G401 (cell line): ENCODE measurements at regions of chr5 and their contacts with region 1.

Region 1: GRCh38 chr5:135741047-135741446 is 93.4 kb upstream of the SLC25A48 start:
- DNase-seq: no peak

Region 2: DNA sequence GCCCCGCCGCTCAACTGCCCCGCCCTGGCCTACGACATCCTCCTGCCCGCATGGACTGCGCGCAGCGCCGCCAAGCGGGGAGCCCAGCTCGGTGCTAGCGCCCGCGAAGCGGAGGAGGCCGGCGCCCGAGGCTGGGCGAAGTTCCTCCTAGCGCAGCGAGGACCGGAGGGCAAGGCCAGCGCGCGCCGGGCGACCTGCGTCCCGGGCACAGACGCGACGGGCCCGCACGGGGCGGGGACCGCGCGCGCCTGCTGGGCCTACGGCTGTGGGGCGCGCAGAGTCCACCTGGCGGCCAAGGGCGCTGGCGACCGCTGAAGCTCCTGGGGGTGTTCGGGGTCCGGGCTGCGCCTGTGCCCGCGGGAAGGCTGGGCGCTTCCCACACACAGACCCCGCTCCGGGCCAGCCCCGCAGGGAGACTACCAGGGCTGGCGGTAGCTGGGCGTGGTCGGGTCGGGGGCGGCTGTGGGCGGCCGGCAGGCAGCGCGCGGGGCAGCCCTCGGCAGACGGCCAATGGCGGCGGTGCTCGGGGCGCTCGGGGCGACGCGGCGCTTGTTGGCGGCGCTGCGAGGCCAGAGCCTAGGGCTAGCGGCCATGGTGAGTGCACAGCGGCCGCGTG is 836.3 kb before region 1 on chr5 and contains the start of gene PCBD2:
- in situ Hi-C with region 1: no loop called
- DNase-seq: peak; percentile 82
- total RNA-seq, gene PCBD2: 4.0 and 12.7 TPM in 2 replicates

Region 3: DNA sequence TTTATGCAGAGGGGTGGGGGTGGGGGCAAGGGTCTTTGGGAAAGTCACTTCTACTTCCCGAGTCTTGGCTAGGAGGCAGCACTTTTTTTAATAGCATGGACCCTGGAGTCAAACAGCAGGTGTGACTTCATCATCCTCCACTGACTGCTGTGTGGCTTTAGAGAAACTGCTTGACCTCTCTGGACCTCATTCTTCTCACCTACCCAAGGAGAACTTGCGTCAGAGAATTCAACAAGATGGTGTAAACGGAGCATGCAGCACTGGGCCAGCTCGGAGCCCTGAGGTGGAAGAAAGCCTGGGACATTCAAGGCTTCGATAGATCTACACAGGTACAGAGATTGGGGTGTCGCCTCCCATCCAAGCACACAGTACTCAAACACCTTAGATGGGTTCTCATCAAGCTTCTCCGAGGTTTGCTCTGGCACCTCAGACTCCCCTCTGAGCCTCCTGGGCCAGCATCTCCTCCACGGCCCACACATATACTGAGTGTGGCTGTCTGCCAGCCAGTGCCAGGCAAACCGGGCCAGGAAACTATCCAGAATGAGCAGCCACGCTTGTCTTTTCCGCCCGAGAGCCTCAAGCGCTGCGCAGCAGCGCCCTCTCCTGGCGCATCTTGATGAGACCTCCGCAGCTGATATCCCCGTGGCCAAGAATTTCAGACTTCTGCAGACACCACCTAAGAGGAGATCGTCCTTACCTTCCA is 88.8 kb after region 1 on chr5:
- in situ Hi-C with region 1: loop called (anchors 10 kb)
- DNase-seq: peak; percentile 77